ENCODE measurements at regions of chr22 and their contacts with region 1.

Region 1: DNA sequence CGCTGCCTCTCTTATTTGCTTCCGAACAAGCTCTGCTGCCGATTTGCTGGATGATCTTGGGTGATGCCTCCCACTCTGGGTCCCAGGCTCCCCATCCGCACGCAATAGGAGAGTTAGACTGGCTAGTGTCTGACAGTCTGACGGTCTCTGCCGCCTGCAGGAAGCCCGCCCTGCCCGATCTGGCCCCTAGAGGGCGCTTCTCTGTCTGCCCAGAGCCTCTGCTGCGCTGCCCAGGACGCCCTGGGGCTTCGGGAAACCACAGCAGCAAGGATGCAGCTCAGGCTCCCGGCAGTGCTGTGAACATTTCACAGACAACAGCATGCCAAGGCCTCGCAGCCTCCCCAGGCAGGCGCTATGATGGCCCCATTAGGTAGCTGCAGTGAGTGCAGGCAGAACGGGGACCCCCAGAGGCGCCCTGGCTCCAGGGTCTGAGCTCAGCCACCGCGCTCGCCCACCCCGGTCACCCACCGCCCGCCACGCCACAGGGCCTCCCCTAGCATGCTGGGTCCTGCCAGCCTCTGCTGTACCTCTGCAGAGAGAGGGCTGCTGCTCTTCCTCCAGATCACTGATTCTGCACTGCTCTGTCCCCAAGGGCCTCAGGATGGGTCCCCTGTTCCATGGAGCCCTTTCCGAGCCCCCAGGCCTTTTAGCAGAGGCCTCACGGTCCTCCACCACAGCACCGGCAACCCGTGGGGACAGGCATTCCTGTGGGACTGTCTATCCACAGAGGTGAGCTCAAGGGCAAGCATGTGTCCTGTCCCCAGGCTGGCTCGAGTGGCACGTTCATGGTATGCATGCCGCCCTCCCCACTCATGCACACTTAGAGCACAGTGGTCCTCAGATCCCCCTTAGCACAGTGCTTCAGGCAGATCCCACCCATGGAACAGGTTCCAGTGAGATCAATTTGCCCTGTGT is 4.3 kb upstream of the BAIAP2L2 start:
- DNase-seq: no peak
- ATAC-seq: peak; percentile 97
- H3K4me3 ChIP-seq: no peak overlapping the region
- H3K27ac ChIP-seq: no peak overlapping the region
- H3K4me1 ChIP-seq: no peaks in the 10 kb centered on the region
- H3K27me3 ChIP-seq: no peaks in the 10 kb centered on the region
- CTCF ChIP-seq: peak; percentile 88 to 96 (median 90); a peak in 5 of 6 replicates
- EP300 ChIP-seq: no peak
- POLR2A ChIP-seq: no peak
- RAD21 ChIP-seq: peak; percentile 75

Region 2: DNA sequence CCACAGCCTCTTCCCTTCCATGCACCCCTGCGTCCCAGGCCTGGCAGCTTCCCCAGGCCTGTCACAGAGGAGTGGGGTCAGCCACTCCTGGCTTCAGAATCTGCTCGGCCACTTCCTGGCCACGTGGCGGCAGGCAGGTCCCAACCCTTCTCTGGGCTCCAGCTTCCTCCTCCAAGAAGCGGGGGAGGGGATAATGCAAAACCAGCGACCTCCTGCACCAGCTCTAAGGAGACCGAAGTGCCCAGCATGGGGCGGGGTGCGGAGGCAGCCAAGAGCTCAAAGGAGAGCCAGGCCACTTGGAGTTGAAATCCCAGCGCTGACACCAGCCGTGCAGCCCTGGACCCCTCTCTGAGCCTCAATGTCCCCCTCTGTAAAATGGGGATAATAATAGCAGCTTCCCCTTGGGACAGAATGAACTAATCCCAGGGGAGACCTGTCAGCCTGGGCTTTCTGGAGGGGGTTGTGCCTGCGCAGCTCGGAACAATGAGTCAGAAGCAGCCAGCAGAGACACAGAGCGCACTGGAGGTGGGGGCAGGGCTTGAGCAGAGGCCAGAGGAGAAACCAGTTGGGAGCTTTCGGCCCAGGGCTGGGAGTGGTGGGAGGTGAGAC is 80.4 kb before region 1 on chr22:
- CTCF ChIA-PET with region 1: no interaction called
- POLR2A ChIA-PET with region 1: no interaction called
- RAD21 ChIA-PET with region 1: no interaction called
- SMC1A ChIA-PET with region 1: no interaction called
- in situ Hi-C with region 1: no loop called
- intact Hi-C with region 1: no loop called
- DNase-seq: peak; percentile 15
- ATAC-seq: peak; percentile 83
- H3K4me3 ChIP-seq: no peak overlapping the region
- H3K27ac ChIP-seq: no peak overlapping the region
- H3K4me1 ChIP-seq: peaks cover 7% of the 10 kb centered on the region; the same call in 1 of the 2 replicates
- H3K27me3 ChIP-seq: no peaks in the 10 kb centered on the region; a peak in 1 of 4 replicates
- CTCF ChIP-seq: no peak
- EP300 ChIP-seq: no peak
- POLR2A ChIP-seq: no peak
- RAD21 ChIP-seq: no peak

Region 3: DNA sequence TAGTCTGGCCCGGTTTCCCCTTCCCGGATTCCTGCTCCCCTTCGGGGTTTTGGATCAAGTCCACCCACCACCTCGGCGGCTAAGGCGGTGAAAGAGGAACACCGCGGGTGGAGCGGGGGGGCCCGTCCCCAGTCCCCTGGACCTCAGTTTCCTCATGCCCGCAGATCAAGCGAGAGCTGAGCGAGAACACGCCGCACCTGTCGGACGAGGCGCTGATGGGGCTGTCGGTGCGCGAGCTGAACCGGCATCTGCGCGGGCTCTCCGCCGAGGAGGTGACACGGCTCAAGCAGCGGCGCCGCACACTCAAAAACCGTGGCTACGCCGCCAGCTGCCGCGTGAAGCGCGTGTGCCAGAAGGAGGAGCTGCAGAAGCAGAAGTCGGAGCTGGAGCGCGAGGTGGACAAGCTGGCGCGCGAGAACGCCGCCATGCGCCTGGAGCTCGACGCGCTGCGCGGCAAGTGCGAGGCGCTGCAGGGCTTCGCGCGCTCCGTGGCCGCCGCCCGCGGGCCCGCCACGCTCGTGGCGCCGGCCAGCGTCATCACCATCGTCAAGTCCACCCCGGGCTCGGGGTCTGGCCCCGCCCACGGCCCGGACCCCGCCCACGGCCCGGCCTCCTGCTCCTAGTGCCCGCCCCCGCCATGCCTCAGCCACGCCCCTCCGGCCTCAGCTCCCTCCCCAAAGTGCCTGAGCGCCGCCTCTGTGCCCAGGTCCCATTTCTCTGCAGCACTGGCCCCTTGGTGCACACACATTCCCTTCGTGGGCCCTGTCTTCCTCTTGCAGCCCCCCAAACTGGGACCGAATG is 99.7 kb after region 1 on chr22:
- CTCF ChIA-PET with region 1: interaction called, 3 read pairs
- POLR2A ChIA-PET with region 1: interaction called, 3 read pairs
- RAD21 ChIA-PET with region 1: no interaction called
- SMC1A ChIA-PET with region 1: no interaction called
- in situ Hi-C with region 1: no loop called
- intact Hi-C with region 1: loop called (anchors 10 kb)
- DNase-seq: no peak
- ATAC-seq: peak; percentile 76
- H3K4me3 ChIP-seq: peak overlapping the region; percentile 58
- H3K27ac ChIP-seq: peak overlapping the region; percentile 5; the same call in 1 of the 2 replicates
- H3K4me1 ChIP-seq: peaks cover 46% of the 10 kb centered on the region
- H3K27me3 ChIP-seq: no peaks in the 10 kb centered on the region
- CTCF ChIP-seq: peak in 1 of 3 experiments; percentile 10; a peak in 2 of 6 replicates
- EP300 ChIP-seq: no peak
- POLR2A ChIP-seq: peak; percentile 55; the same call in 1 of the 2 replicates
- RAD21 ChIP-seq: no peak

Region 4: GRCh38 chr22:38230108-38230825 is 115.5 kb after region 1 on chr22:
- CTCF ChIA-PET with region 1: interaction called, 12 read pairs
- POLR2A ChIA-PET with region 1: no interaction called
- RAD21 ChIA-PET with region 1: interaction called, 9 read pairs
- SMC1A ChIA-PET with region 1: no interaction called
- in situ Hi-C with region 1: no loop called
- intact Hi-C with region 1: no loop called
- DNase-seq: no peak
- ATAC-seq: peak; percentile 48; the same call in 2 of the 3 replicates
- H3K4me3 ChIP-seq: no peak overlapping the region
- H3K27ac ChIP-seq: no peak overlapping the region
- H3K4me1 ChIP-seq: no peaks in the 10 kb centered on the region
- H3K27me3 ChIP-seq: no peaks in the 10 kb centered on the region
- CTCF ChIP-seq: peak; percentile 42 to 45 (median 42); a peak in 5 of 6 replicates
- EP300 ChIP-seq: no peak
- POLR2A ChIP-seq: no peak
- RAD21 ChIP-seq: peak; percentile 74

Region 5: DNA sequence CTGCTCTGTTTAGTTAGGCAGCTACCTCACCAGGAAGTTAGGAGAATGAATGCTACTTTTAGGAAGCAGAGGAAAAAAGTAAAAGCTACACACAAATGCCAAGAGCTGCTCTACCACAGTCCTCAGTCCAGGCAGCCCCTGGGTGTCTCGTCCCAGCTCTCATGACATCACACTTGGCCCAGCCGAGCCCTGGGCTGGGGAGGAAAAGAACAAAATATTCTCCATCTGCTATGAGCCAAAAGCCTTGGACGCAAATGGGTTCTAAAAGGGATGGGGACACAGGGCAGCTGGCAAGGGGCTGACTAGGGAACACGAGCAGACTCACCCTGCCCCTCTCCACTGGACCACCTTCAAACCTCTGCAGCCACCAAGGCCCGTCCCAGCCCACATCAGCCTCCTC is 132.0 kb after region 1 on chr22:
- CTCF ChIA-PET with region 1: no interaction called
- POLR2A ChIA-PET with region 1: no interaction called
- RAD21 ChIA-PET with region 1: no interaction called
- SMC1A ChIA-PET with region 1: no interaction called
- in situ Hi-C with region 1: no loop called
- intact Hi-C with region 1: no loop called
- DNase-seq: no peak
- ATAC-seq: no peak
- H3K4me3 ChIP-seq: no peak overlapping the region
- H3K27ac ChIP-seq: no peak overlapping the region
- H3K4me1 ChIP-seq: peaks cover 12% of the 10 kb centered on the region
- H3K27me3 ChIP-seq: no peaks in the 10 kb centered on the region
- CTCF ChIP-seq: no peak
- EP300 ChIP-seq: no peak
- POLR2A ChIP-seq: no peak
- RAD21 ChIP-seq: no peak

Region 6: DNA sequence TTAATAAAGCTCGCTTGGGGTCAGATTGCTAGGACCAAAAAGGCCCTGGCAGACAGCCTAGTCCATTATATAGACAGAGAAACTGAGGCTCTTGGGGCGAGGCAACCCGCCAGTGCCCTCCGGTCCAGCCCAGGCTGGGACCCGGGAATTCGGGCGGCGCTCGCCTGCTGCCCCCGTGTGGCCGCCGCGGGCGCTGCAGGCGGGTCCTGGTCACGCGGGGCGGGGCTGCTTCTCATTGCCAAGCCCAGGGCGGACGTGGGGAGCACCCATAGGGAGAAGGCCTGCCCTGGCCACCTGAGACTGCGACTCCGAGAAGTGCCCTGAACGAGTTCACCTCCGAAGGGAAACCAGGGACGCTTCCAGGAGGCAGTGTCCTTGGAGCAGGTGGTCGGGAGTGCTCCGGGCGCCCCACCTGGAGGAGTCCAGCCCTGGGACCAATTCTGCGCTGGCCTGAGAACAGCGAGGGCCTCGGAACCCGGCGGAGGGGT is 238.4 kb after region 1 on chr22:
- CTCF ChIA-PET with region 1: no interaction called
- POLR2A ChIA-PET with region 1: no interaction called
- RAD21 ChIA-PET with region 1: no interaction called
- SMC1A ChIA-PET with region 1: no interaction called
- in situ Hi-C with region 1: no loop called
- intact Hi-C with region 1: loop called (anchors 10 kb)
- DNase-seq: no peak
- ATAC-seq: peak; percentile 95
- H3K4me3 ChIP-seq: no peak overlapping the region
- H3K27ac ChIP-seq: no peak overlapping the region
- H3K4me1 ChIP-seq: no peaks in the 10 kb centered on the region
- H3K27me3 ChIP-seq: no peaks in the 10 kb centered on the region
- CTCF ChIP-seq: peak; percentile 91 to 94 (median 93)
- EP300 ChIP-seq: no peak
- POLR2A ChIP-seq: peak; percentile 40; the same call in 1 of the 2 replicates
- RAD21 ChIP-seq: peak; percentile 90

Measured in GM12878 (cell line).